Right ventricle myocardium inferior (tissue), 1 donor: ENCODE measurements at regions of chr11 and their contacts with region 1.

Region 1: GRCh38 chr11:31903225-31904074 is 92.3 kb upstream of the PAX6 start:
- DNase-seq: no peak
- ATAC-seq: peak; percentile 87

Region 2: GRCh38 chr11:31747581-31747980 is 155.9 kb before region 1 on chr11:
- intact Hi-C with region 1: no loop called
- DNase-seq: no peak
- ATAC-seq: no peak

Region 3: GRCh38 chr11:31940371-31941037 is 37.1 kb after region 1 on chr11:
- intact Hi-C with region 1: loop called (anchors 2 kb)
- DNase-seq: no peak
- ATAC-seq: peak; percentile 91